Vagina (tissue), 2 donors: ENCODE measurements at regions of chr15 and their contacts with region 1.

Region 1: GRCh38 chr15:95446854-95447253 is 883.6 kb upstream of the NR2F2 start:
- DNase-seq: no peak
- H3K4me3 ChIP-seq: no peak overlapping the region
- H3K27ac ChIP-seq: no peak overlapping the region
- H3K4me1 ChIP-seq: peaks cover 6% of the 10 kb centered on the region
- H3K27me3 ChIP-seq: no peaks in the 10 kb centered on the region
- CTCF ChIP-seq: no peak
- POLR2A ChIP-seq: no peak

Region 2: GRCh38 chr15:94963953-94964352 is 482.9 kb before region 1 on chr15:
- intact Hi-C with region 1: no loop called
- DNase-seq: no peak
- H3K4me3 ChIP-seq: no peak overlapping the region
- H3K27ac ChIP-seq: no peak overlapping the region
- H3K4me1 ChIP-seq: no peaks in the 10 kb centered on the region
- H3K27me3 ChIP-seq: no peaks in the 10 kb centered on the region
- CTCF ChIP-seq: no peak
- POLR2A ChIP-seq: no peak

Region 3: DNA sequence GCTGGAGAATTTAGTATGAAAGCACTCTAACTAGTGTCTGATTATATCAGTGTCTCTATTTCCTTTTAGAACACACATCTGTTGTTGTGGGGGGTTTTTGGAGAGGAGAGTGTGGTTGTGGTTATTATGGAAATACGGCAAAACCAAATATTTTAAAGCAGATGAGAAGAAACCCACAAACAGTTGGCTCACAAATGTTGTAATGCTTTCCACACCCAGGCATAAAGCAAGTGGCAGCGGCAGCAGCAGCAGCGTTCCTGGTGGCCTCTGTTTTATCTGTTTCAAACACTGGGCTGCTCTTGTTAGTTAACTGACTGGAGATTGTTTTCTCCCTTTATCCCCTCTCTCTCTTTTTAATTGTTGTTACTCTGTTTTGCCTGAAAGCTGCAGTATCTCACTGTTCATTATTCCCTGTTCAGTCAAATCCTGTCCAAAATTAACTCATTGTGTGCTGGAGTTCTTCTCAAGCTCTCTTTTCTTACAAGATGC is 161.9 kb before region 1 on chr15:
- intact Hi-C with region 1: loop called (anchors 10 kb)
- DNase-seq: no peak
- H3K4me3 ChIP-seq: no peak overlapping the region
- H3K27ac ChIP-seq: peak overlapping the region; percentile 42
- H3K4me1 ChIP-seq: peaks cover 11% of the 10 kb centered on the region
- H3K27me3 ChIP-seq: no peaks in the 10 kb centered on the region
- CTCF ChIP-seq: no peak
- POLR2A ChIP-seq: no peak